Activated CD4-positive, alpha-beta memory T cell treated with anti-CD3 and anti-CD28 coated beads for 36 hours (primary cell): ENCODE measurements at regions of chr16 and their contacts with region 1.

Region 1: DNA sequence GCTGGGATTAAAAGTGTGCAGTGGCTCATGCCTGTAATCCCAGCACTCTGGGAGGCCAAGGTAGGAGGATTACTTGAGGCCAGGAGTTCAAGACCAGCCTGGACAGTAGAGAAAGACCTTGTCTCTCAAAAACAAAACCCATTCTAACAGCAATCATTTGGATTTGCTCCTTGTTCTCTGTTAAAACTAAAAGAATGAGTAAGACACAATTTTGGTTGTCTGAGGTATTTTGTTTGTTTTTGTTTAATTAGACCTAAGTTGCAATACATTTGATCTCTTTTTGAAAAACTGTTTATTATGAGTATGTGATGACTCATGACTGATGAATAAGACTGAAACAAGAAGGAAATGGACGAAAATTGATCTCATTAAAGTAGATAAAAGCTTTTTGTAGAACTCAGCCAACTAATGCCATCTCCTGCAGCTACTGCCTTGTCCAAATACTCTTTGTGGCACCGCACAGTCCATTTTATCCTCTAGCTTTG is 29.0 kb downstream of the GLG1 start:
- DNase-seq: no peak
- H3K4me3 Mint-ChIP-seq: no peak overlapping the region
- H3K27ac Mint-ChIP-seq: peak overlapping the region; percentile 33
- H3K4me1 Mint-ChIP-seq: peaks cover 55% of the 10 kb centered on the region
- H3K27me3 Mint-ChIP-seq: no peaks in the 10 kb centered on the region

Region 2: DNA sequence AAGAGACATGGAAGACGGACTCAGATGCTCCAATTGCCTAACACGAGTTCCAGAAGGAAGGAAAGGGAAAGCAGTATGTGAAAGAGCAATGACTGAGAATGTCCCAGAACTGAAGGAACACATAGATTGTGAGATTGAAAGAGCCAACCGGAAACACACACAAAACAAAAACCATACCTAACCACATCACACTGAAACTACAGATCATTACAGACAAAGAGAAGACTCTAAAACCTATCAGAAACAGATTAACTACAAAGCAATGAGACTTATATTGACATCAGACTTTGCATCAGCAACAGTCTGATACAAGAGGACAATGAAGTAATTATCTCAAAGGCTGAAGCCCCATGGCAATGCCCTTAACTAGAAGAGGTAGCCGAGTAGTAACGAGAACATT is 111.1 kb before region 1 on chr16:
- CTCF ChIA-PET with region 1: no interaction called
- POLR2A ChIA-PET with region 1: no interaction called
- intact Hi-C with region 1: loop called (anchors 2 kb)
- DNase-seq: no peak
- H3K4me3 Mint-ChIP-seq: no peak overlapping the region
- H3K27ac Mint-ChIP-seq: peak overlapping the region; percentile 50
- H3K4me1 Mint-ChIP-seq: peaks cover 32% of the 10 kb centered on the region
- H3K27me3 Mint-ChIP-seq: no peaks in the 10 kb centered on the region

Region 3: GRCh38 chr16:74556375-74556922 is 21.5 kb before region 1 on chr16:
- CTCF ChIA-PET with region 1: no interaction called
- POLR2A ChIA-PET with region 1: no interaction called
- intact Hi-C with region 1: no loop called
- DNase-seq: no peak
- H3K4me3 Mint-ChIP-seq: no peak overlapping the region
- H3K27ac Mint-ChIP-seq: no peak overlapping the region
- H3K4me1 Mint-ChIP-seq: peaks cover 34% of the 10 kb centered on the region
- H3K27me3 Mint-ChIP-seq: no peaks in the 10 kb centered on the region

Region 4: DNA sequence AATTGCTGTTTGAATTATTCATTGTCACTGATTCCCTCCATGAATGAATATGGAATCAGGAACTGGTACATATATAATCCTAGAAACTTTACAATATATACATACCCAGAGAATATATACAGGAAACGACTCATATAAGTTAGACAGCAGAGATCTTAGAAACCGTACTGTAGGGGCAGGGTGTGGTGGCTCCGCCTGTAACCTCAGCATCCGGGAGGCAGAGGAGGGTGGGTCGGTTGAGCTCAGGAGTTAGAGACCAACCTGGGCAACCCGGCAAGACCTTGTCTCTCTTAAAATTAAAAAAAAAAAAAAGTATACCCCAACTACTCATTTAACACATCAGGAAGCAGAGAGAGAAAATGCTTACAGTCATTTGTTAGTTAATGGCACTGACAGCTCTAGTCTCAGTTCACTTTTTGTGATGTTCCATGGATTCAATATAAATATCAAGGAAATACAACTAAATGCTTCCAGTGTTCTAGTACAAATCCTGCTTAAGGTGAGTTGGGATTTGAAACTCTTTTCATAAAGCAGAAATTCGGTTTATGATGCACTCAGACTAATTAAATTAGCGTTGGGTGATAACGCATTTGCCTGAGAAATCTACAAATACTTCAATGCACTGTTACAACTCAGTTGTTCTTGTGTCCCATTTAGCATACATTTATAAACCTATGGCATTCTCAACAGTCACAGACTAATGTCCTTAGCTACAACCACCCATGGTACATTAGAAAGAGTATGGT is 23.4 kb after region 1 on chr16:
- CTCF ChIA-PET with region 1: no interaction called
- POLR2A ChIA-PET with region 1: no interaction called
- intact Hi-C with region 1: loop called (anchors 2 kb)
- DNase-seq: peak; percentile 83
- H3K4me3 Mint-ChIP-seq: peak overlapping the region; percentile 37
- H3K27ac Mint-ChIP-seq: peak overlapping the region; percentile 83
- H3K4me1 Mint-ChIP-seq: peaks cover 63% of the 10 kb centered on the region
- H3K27me3 Mint-ChIP-seq: no peaks in the 10 kb centered on the region

Region 5: GRCh38 chr16:74633686-74634085 is 55.8 kb after region 1 on chr16:
- CTCF ChIA-PET with region 1: no interaction called
- POLR2A ChIA-PET with region 1: no interaction called
- intact Hi-C with region 1: no loop called
- DNase-seq: no peak
- H3K4me3 Mint-ChIP-seq: no peak overlapping the region
- H3K27ac Mint-ChIP-seq: no peak overlapping the region
- H3K4me1 Mint-ChIP-seq: peaks cover 5% of the 10 kb centered on the region
- H3K27me3 Mint-ChIP-seq: no peaks in the 10 kb centered on the region